RWPE1 (cell line): ENCODE measurements at regions of chr19 and their contacts with region 1.

Region 1: GRCh38 chr19:5504115-5504514 is 48.9 kb downstream of the ZNRF4 start:
- DNase-seq: no peak
- H3K27ac ChIP-seq: no peak overlapping the region
- CTCF ChIP-seq: no peak

Region 2: DNA sequence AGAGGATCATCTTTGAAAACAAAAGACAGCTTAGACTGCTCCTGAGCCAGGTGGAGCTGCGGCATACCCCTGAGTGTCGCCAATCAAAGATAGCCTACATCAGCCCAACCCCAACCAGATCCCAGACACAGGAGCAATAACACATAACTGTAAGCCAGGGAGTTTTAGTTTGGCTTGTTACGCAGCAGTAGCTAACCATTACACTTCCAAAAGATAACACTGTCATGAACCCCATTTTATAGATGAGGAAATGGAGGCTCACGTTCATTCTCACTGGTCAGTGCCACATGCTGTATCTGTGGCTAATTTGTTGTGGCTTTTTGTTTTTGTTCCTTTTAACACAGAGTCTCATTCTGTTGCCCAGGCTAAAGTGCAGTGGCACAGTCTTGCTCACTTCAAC is 16.4 kb after region 1 on chr19:
- CTCF ChIA-PET with region 1: interaction called, 6 read pairs
- POLR2A ChIA-PET with region 1: interaction called, 12 read pairs
- DNase-seq: no peak
- H3K27ac ChIP-seq: no peak overlapping the region
- CTCF ChIP-seq: no peak